Aorta (tissue), 5 donors: ENCODE measurements at regions of chr1 and their contacts with region 1.

Region 1: GRCh38 chr1:174005032-174005431 is 17.1 kb downstream of the RC3H1 start:
- DNase-seq: no peak
- ATAC-seq: peak; percentile 33
- H3K4me3 ChIP-seq: no peak overlapping the region
- H3K27ac ChIP-seq: no peak overlapping the region
- H3K4me1 ChIP-seq: peaks cover 0 to 1% of the 10 kb centered on the region in 2 donors
- H3K27me3 ChIP-seq: no peaks in the 10 kb centered on the region

Region 2: GRCh38 chr1:174074757-174075156 is 69.7 kb after region 1 on chr1:
- intact Hi-C with region 1: loop called in 1 of 2 experiments (anchors 10 kb)
- DNase-seq: no peak
- ATAC-seq: no peak
- H3K4me3 ChIP-seq: no peak overlapping the region
- H3K27ac ChIP-seq: no peak overlapping the region
- H3K4me1 ChIP-seq: no peaks in the 10 kb centered on the region
- H3K27me3 ChIP-seq: no peaks in the 10 kb centered on the region

Region 3: DNA sequence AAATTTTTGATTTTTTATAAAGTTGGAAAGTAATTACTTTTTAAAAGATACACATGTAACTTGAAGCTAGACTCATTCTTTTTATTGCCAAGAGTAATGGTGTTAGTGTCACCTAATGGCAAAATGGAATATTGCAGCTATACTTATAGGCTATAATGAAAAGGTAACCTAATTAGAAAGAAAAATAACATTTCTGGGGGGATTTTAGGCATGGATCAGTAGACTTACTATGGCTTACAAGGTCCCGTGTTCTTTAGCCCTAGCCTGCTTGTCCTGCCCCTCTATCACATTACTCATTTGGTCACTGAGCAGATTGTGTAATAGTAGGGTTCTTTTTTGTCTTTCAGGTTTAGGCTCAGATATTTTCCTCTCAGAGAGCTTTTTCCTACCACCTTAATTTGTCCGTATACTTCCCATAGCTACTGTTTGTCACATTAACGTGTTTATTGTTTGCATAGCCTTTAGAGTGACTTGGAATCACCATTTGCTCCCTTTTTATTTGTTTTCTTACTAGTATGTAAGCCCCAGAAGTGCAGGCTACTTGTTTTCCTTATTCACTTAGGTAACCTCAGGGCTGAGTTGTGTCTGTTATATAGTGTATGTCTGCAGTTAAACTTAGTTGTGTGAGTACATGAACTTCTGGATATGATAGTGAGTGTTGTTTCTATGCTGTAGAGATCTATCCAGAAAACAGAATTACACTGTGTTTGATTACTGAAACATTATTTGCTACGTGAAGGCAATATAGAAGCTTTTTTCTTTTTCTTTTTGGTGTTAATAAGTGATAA is 212.9 kb after region 1 on chr1:
- intact Hi-C with region 1: loop called in 1 of 2 experiments (anchors 10 kb)
- DNase-seq: no peak
- ATAC-seq: no peak
- H3K4me3 ChIP-seq: no peak overlapping the region
- H3K27ac ChIP-seq: no peak overlapping the region
- H3K4me1 ChIP-seq: no peaks in the 10 kb centered on the region
- H3K27me3 ChIP-seq: no peaks in the 10 kb centered on the region